ENCODE measurements at regions of chr10 and their contacts with region 1.

Region 1: GRCh38 chr10:62268399-62269114 is at the start of gene RTKN2:
- DNase-seq: peak; percentile 90
- ATAC-seq: peak; percentile 95
- H3K4me3 ChIP-seq: peak within 1 kb of the TSS; percentile 88 to 93 (median 90)
- H3K27ac ChIP-seq: peak within 1 kb of the TSS; percentile 67
- H3K4me1 ChIP-seq: peaks cover 48% of the 10 kb centered on the region
- H3K27me3 ChIP-seq: no peaks in the 10 kb centered on the region
- CTCF ChIP-seq: 0 out of 2 replicates have a peak, but pooled peaks have one; percentile 13
- EP300 ChIP-seq: no peak
- POLR2A ChIP-seq: peak; percentile 57 to 66
- RAD21 ChIP-seq: no peak; the same call in 1 of the 2 replicates
- total RNA-seq, gene RTKN2: 7.0 and 10.8 TPM in 2 replicates

Region 2: DNA sequence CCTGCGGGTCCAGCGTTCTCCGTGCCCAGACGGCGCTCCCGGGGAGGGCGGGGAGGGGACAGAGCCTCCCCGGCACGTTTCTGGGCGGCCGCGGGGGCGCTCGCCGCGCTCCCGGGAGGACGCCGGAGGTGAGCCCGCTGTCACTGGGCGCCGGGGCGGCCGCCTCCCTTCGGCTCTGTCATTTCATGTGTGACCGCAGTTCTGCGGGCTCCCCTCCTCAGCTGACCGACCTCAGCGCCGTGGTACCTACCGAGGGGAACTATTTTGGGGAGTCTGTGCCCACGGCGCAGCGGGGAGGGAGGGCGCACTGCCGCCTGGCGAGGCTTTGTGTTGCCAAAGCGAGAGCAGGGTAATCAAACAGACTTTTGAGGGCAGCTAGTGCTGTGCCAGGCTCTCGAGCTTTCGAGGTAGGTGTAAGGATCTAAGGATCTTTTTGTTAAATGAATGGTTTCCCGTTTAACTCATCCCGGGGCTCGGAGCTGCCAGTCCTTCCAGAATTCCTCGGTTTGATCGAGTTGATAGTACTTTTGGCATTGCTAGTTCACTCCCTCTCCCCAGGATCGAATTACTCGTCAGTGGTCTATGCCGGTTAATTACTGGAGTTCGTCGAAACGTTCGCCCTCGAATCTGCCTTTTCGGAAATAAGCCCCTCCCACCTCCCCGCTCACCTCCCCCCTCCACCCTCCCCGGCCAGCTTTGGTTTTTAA is 365.2 kb before region 1 on chr10:
- CTCF ChIA-PET with region 1: no interaction called
- POLR2A ChIA-PET with region 1: interaction called, 5 read pairs
- in situ Hi-C with region 1: no loop called
- intact Hi-C with region 1: loop called (anchors 5 kb)
- DNase-seq: peak; percentile 38
- ATAC-seq: peak; percentile 89
- H3K4me3 ChIP-seq: peak overlapping the region; percentile 93 to 96 (median 94)
- H3K27ac ChIP-seq: peak overlapping the region; percentile 94
- H3K4me1 ChIP-seq: peaks cover 51% of the 10 kb centered on the region
- H3K27me3 ChIP-seq: no peaks in the 10 kb centered on the region; a peak in 1 of 5 replicates
- CTCF ChIP-seq: peak; percentile 36; the same call in 1 of the 2 replicates
- EP300 ChIP-seq: no peak
- POLR2A ChIP-seq: peak; percentile 39 to 47; a peak in 2 of 4 replicates
- RAD21 ChIP-seq: peak; percentile 45; the same call in 1 of the 2 replicates

Region 3: DNA sequence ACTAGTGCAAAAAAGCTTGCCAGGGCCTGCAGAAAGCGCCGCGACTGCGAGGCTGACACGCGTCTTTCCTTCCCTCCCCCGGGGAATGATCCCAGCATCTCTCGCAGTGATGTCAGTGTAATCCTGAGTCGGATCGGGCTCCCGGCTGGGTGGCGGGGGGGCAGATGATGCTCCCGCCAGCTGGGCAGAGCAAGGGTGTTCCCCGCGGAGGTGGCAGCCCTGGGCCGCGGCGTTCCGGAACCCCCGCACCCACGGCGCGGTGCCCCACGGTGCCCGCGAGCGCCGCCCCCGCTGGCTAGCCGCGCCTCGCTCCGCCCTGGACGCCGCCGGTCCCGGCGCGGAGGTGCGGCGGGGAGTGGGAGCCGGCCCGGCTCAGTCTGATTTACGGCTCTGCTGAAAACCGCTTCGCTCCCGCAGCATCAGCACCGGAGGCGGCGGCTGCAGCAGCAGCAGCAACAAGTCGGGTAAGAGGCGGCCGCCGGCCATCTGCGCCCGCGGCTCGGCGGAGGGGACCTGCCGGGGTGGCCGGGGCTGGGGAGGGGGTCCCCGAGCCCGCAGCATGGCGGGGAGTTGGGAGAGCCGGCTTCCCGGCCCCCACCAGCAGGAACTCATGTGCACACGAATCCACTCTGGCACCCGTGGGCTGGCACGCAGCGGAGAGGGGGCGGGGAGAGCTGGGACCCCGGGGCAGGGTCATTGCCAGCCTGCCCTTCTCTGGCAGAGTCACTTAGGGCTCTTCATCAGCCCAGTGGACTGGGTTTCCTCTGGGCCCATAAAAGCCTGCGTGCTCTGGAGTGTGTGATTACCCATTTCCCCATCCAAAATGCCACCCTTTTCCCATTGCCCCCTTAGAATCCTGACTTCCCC is 105.7 kb after region 1 on chr10 and contains the start of gene ZNF365:
- CTCF ChIA-PET with region 1: no interaction called
- POLR2A ChIA-PET with region 1: no interaction called
- in situ Hi-C with region 1: no loop called
- intact Hi-C with region 1: loop called (anchors 5 kb)
- DNase-seq: no peak
- ATAC-seq: peak; percentile 64
- H3K4me3 ChIP-seq: peak within 1 kb of the TSS in 1 of 3 experiments; percentile 59; a peak in 2 of 6 replicates
- H3K27ac ChIP-seq: no peak within 1 kb of the TSS
- H3K4me1 ChIP-seq: no peaks in the 10 kb centered on the region
- H3K27me3 ChIP-seq: peaks cover 4 to 45% of the 10 kb centered on the region in 2 experiments; a peak in 4 of 5 replicates
- CTCF ChIP-seq: no peak
- EP300 ChIP-seq: no peak
- POLR2A ChIP-seq: no peak
- RAD21 ChIP-seq: no peak
- total RNA-seq, gene ZNF365: not detected in 2 replicates

Region 4: DNA sequence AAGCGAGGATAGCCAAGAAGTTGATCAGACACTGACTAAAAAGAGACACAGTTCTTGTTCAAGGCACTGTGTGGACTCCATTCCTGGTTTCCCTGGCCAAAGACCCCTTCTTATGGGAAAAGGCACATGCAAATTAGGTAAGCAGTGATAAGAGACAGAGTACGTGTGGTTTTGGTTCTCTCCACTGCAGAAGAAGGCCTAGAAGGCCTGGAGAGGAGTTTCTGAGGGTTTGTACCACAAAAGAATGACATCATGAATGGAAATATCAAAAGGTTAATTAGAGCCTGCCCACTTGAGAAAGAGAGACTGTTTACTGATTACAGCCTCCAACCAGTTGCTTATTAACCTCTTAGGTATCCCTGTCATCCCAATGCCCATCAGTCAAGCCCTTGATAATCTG is 243.1 kb after region 1 on chr10:
- CTCF ChIA-PET with region 1: no interaction called
- POLR2A ChIA-PET with region 1: no interaction called
- in situ Hi-C with region 1: no loop called
- intact Hi-C with region 1: no loop called
- DNase-seq: no peak
- ATAC-seq: no peak
- H3K4me3 ChIP-seq: no peak overlapping the region
- H3K27ac ChIP-seq: no peak overlapping the region
- H3K4me1 ChIP-seq: no peaks in the 10 kb centered on the region
- H3K27me3 ChIP-seq: no peaks in the 10 kb centered on the region
- CTCF ChIP-seq: no peak
- EP300 ChIP-seq: no peak
- POLR2A ChIP-seq: no peak
- RAD21 ChIP-seq: no peak

Region 5: GRCh38 chr10:62804356-62805230 is 536.0 kb after region 1 on chr10 and contains the start of gene ADO:
- CTCF ChIA-PET with region 1: no interaction called
- POLR2A ChIA-PET with region 1: no interaction called
- in situ Hi-C with region 1: loop called (anchors 25 kb)
- intact Hi-C with region 1: loop called (anchors 10 kb)
- DNase-seq: peak; percentile 73
- ATAC-seq: peak; percentile 92
- H3K4me3 ChIP-seq: peak within 1 kb of the TSS; percentile 60 to 100 (median 95)
- H3K27ac ChIP-seq: peak within 1 kb of the TSS; percentile 75
- H3K4me1 ChIP-seq: peaks cover 34% of the 10 kb centered on the region
- H3K27me3 ChIP-seq: no peaks in the 10 kb centered on the region
- CTCF ChIP-seq: no peak; the same call in 1 of the 2 replicates
- EP300 ChIP-seq: 0 out of 4 replicates have a peak, but pooled peaks of 1 of the 2 experiments have one; percentile 34
- POLR2A ChIP-seq: peak in 1 of 2 experiments; percentile 67; a peak in 3 of 4 replicates
- RAD21 ChIP-seq: peak; percentile 40; the same call in 1 of the 2 replicates
- total RNA-seq, gene ADO: 15.9 and 16.5 TPM in 2 replicates

Measured in HepG2 (cell line).